ENCODE measurements at regions of chr5 and their contacts with region 1.

Region 1: GRCh38 chr5:50962934-50963872 is 296.8 kb downstream of the PARP8 start:
- DNase-seq: peak; percentile 67 to 95
- H3K4me3 ChIP-seq: peak overlapping the region; percentile 16
- CTCF ChIP-seq: peak in 1 of 3 donors; percentile 55
- POLR2A ChIP-seq: no peak

Region 2: GRCh38 chr5:50672663-50673062 is 290.5 kb before region 1 on chr5:
- intact Hi-C with region 1: no loop called
- DNase-seq: no peak
- H3K4me3 ChIP-seq: no peak overlapping the region
- CTCF ChIP-seq: no peak
- POLR2A ChIP-seq: no peak

Region 3: DNA sequence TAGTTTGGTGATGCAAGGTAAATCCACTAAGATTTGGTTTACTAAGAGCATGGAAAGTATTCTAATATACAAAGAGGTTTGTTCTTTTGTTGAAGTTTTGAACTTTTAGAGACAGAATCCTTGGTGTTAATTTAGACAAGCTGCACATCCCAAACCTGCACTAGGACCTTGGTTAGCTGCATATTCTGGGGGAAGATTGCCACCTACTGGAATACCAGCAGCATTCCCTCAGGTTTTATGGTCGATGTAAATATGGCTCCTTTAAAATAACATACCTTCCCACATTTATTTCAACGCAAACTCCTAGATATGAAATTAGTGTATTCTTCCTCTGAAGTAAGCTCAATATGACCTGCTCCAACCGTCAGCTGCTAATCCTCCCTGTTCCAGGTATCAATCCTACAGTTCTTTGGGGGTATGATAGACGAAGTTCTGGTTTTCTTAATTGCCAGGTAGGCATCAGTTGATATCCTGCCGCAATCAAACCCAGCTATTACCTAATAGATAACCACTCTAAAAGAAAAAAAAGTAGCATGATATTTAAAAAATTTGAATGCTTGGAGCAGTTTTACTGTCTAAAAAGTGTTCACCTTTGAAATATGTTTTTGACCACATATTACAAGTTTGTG is 1044.1 kb after region 1 on chr5:
- intact Hi-C with region 1: loop called (anchors 10 kb)
- DNase-seq: no peak
- H3K4me3 ChIP-seq: no peak overlapping the region
- CTCF ChIP-seq: no peak
- POLR2A ChIP-seq: no peak

Measured in lower leg skin (tissue), 4 donors.